PC-9 (cell line): ENCODE measurements at regions of chr9 and their contacts with region 1.

Region 1: DNA sequence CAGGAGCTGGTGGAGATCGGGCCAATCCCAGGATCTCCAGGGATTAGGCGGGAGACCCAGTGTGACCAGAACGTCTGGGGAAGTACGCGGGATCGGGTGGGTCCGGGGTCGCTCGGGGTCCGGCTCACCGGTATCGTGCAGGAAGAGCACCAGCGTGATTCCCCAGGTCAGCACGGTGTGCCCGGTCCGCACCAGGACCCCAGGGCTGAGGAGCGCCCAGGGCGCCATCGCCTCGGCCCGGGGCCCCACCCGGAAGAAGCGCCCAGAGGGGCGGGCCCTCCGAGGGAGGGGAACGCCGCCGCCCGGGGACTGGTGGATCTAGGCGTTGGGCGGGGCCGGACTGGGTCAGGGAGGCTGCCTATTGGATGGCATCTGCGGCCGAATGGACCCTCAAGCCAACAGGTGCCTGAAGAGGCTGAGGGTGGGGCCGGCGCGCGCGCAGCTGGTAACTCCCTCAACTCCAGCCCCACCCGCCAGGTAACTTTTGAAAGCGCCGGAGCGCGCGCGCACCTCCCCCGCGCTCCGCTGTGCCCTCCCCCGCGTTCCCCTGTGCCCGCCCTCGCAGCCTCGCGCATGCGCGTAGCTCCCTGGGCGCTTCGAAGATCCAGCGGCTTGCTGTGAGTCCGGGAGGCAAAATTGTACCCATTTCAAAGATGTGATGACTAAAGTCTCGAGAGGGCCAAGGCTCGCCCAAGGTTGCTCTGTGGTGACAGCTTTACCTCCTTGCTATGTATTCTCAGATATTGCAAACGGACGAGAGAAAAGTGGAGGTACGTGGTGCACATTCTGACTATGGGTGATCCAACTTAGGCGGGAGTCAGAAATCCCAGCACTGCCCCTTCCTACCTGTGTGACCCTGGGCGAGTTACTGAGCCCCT is at the start of gene ZDHHC12:
- DNase-seq: peak; percentile 95 to 100
- H3K4me3 ChIP-seq: peak within 1 kb of the TSS; percentile 80
- H3K27ac ChIP-seq: no peak within 1 kb of the TSS
- H3K4me1 ChIP-seq: no peaks in the 10 kb centered on the region
- H3K27me3 ChIP-seq: no peaks in the 10 kb centered on the region
- CTCF ChIP-seq: no peak
- total RNA-seq, gene ZDHHC12: 102 and 133 TPM in 2 replicates

Region 2: GRCh38 chr9:127991042-127991756 is 732.9 kb before region 1 on chr9:
- CTCF ChIA-PET with region 1: no interaction called
- POLR2A ChIA-PET with region 1: interaction called, 16 read pairs
- intact Hi-C with region 1: no loop called
- DNase-seq: peak; percentile 81 to 92
- H3K4me3 ChIP-seq: no peak overlapping the region
- H3K27ac ChIP-seq: peak overlapping the region; percentile 79
- H3K4me1 ChIP-seq: peaks cover 47% of the 10 kb centered on the region
- H3K27me3 ChIP-seq: no peaks in the 10 kb centered on the region
- CTCF ChIP-seq: no peak

Region 3: DNA sequence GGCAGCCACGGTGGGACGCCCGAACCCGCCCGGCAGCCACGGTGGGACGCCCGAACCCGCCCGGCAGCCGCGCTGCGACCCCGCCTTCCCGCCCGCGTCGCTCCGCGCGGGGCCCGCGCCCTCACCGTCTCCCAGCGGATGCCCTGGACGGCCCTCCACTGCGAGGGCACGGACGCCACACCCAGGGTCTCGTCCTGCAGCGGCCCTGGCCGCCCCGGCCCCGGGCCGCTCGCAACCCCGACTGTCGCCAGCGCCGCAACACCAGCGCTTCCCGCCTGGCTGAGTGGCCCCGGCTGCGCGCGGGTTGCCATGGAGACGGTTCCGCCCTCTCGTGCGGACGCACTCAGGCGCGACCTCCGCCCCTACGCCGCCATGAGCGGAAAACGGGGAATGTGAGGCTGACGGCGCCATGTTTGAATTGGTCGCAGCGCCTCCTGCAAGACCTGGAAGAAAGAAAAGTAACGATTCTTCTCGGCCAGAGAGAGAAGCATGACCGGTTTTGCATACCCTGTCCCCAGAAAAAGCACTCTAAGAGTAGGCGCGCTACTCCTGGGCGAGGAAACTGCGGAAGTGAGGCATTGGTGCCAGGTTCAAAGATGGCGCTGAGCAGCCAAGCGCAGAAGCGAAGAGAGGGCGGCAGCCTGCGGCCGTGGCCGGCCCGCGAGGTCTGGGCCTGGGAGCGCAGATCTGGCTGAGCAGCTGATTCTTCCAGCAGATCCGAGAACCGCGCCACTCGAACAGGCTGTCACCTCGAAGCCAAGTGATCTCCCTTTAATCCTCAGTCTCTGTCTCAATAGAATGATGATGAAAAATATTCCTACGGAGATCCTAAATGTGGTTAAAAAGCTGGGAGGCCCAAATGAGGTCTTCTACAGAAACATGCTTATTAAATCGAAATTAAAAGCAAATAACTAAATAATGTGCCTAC is 67.4 kb before region 1 on chr9 and contains the start of gene DYNC2I2:
- CTCF ChIA-PET with region 1: no interaction called
- POLR2A ChIA-PET with region 1: no interaction called
- intact Hi-C with region 1: loop called (anchors 1 kb)
- DNase-seq: peak; percentile 80 to 97
- H3K4me3 ChIP-seq: peak within 1 kb of the TSS; percentile 99
- H3K27ac ChIP-seq: peak within 1 kb of the TSS; percentile 98
- H3K4me1 ChIP-seq: peaks cover 8% of the 10 kb centered on the region; the same call in 1 of the 2 replicates
- H3K27me3 ChIP-seq: no peaks in the 10 kb centered on the region
- CTCF ChIP-seq: no peak
- total RNA-seq, gene DYNC2I2: 225 and 263 TPM in 2 replicates

Region 4: GRCh38 chr9:128688512-128689292 is 35.4 kb before region 1 on chr9 and contains the start of gene SET:
- CTCF ChIA-PET with region 1: no interaction called
- POLR2A ChIA-PET with region 1: interaction called, 5 read pairs
- intact Hi-C with region 1: loop called (anchors 1 kb)
- DNase-seq: peak; percentile 71 to 98
- H3K4me3 ChIP-seq: peak within 1 kb of the TSS; percentile 80
- H3K27ac ChIP-seq: peak within 1 kb of the TSS; percentile 78
- H3K4me1 ChIP-seq: peaks cover 47% of the 10 kb centered on the region
- H3K27me3 ChIP-seq: no peaks in the 10 kb centered on the region
- CTCF ChIP-seq: no peak
- total RNA-seq, gene SET: 539 and 738 TPM in 2 replicates

Region 5: DNA sequence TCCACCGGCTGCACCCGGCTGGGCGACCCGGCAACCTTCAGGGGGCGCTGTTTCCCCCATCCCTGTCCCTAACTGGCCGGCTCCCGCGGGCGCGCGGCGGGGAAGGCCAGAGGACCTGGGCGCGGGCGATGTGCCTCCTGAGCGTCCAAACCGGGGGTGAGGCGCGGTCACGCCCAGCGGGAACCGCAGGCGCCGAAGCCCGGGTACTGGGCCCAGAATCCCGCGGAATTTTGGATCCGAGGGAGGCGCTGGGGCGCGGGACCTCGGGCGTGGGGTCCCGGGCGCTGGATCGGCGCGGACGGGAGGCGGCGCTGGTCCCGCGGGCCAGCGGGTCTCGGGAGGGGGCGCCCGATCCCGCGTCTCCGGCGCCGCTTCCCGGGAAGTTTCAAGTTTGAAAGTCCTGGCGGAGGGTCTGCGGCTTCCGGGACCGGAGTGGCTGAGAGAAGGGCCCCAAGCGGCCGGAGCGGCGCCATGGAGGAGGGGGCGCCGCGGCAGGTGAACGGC is 21.6 kb before region 1 on chr9 and contains the start of gene PKN3:
- CTCF ChIA-PET with region 1: interaction called, 16 read pairs
- POLR2A ChIA-PET with region 1: interaction called, 4 read pairs
- intact Hi-C with region 1: no loop called
- DNase-seq: peak; percentile 31 to 93
- H3K4me3 ChIP-seq: peak within 1 kb of the TSS; percentile 61
- H3K27ac ChIP-seq: no peak within 1 kb of the TSS
- H3K4me1 ChIP-seq: no peaks in the 10 kb centered on the region
- H3K27me3 ChIP-seq: no peaks in the 10 kb centered on the region
- CTCF ChIP-seq: peak; percentile 81
- total RNA-seq, gene PKN3: 5.5 and 9.1 TPM in 2 replicates